Mammary epithelial cell (primary cell): ENCODE measurements at regions of chr7 and their contacts with region 1.

Region 1: DNA sequence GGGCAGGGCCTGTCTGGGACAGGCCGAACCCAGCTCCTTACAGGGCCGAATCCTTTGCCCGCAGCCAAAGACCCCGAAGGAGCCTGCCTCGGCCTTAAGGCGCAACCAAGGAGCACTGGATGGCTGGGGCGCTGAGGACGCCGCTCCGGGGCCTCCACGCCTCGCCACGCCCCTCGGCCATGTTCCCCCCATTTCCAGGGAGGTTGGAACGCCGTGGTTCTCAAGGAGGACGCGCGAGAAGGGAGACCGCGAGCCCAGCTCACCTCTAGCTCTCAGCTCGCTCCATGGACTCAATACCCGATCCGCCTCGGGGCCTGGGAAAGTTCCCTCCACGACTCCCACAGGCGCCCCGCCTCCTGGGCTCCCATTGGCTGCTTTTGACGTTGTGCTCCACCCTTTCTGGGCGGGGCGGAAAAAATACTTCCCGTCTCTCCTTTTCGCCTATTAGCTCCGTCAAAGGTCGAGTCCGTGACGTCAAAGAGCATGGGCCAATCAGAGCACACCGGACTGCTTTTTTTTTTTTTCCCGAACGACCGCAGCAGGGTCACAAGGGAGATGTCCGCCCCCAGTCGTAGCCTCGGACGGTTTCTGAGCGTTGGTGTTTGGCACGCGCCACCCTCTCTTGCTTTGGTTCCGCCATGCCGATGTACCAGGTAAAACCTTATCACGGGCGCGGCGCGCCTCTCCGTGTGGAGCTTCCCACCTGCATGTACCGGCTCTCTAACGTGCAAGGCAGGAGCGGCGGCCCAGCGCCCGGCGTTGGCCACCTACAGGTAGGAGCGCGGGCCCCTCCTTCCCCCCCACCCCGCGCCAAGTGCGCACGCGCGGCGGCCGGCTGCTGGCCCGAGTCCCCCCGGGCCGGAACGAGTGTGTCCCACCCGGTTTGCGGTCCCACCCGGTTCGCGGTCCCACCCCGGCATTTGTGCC is 305.7 kb downstream of the TYW1 start:
- DNase-seq: peak; percentile 99
- H3K4me3 ChIP-seq: peak overlapping the region; percentile 80 to 84 (median 80)
- H3K27ac ChIP-seq: peak overlapping the region; percentile 85
- H3K4me1 ChIP-seq: peaks cover 4% of the 10 kb centered on the region
- H3K27me3 ChIP-seq: no peaks in the 10 kb centered on the region
- CTCF ChIP-seq: peak in 1 of 2 donors; percentile 53

Region 2: GRCh38 chr7:67045496-67045995 is 256.8 kb before region 1 on chr7:
- CTCF ChIA-PET with region 1: interaction called, 5 read pairs
- dilution Hi-C with region 1: no loop called
- in situ Hi-C with region 1: no loop called
- intact Hi-C with region 1: loop called (anchors 10 kb)
- DNase-seq: no peak
- H3K4me3 ChIP-seq: no peak overlapping the region
- H3K27ac ChIP-seq: no peak overlapping the region
- H3K4me1 ChIP-seq: peaks cover 10% of the 10 kb centered on the region
- H3K27me3 ChIP-seq: no peaks in the 10 kb centered on the region
- CTCF ChIP-seq: no peak

Region 3: GRCh38 chr7:67251986-67252558 is 50.3 kb before region 1 on chr7:
- CTCF ChIA-PET with region 1: no interaction called
- dilution Hi-C with region 1: no loop called
- in situ Hi-C with region 1: no loop called
- intact Hi-C with region 1: no loop called
- DNase-seq: no peak
- H3K4me3 ChIP-seq: no peak overlapping the region
- H3K27ac ChIP-seq: no peak overlapping the region
- H3K4me1 ChIP-seq: peaks cover 7% of the 10 kb centered on the region
- H3K27me3 ChIP-seq: no peaks in the 10 kb centered on the region
- CTCF ChIP-seq: no peak

Region 4: GRCh38 chr7:67364431-67365017 is 62.1 kb after region 1 on chr7:
- CTCF ChIA-PET with region 1: no interaction called
- dilution Hi-C with region 1: no loop called
- in situ Hi-C with region 1: no loop called
- intact Hi-C with region 1: no loop called
- DNase-seq: no peak
- H3K4me3 ChIP-seq: no peak overlapping the region
- H3K27ac ChIP-seq: no peak overlapping the region
- H3K4me1 ChIP-seq: no peaks in the 10 kb centered on the region
- H3K27me3 ChIP-seq: no peaks in the 10 kb centered on the region
- CTCF ChIP-seq: no peak

Region 5: GRCh38 chr7:67377939-67378862 is 75.8 kb after region 1 on chr7:
- CTCF ChIA-PET with region 1: no interaction called
- dilution Hi-C with region 1: no loop called
- in situ Hi-C with region 1: no loop called
- intact Hi-C with region 1: no loop called
- DNase-seq: peak; percentile 37
- H3K4me3 ChIP-seq: no peak overlapping the region
- H3K27ac ChIP-seq: no peak overlapping the region
- H3K4me1 ChIP-seq: no peaks in the 10 kb centered on the region
- H3K27me3 ChIP-seq: no peaks in the 10 kb centered on the region
- CTCF ChIP-seq: peak; percentile 60 to 76